ENCODE measurements at regions of chr10 and their contacts with region 1.

Region 1: GRCh38 chr10:74255888-74256357 is 104.9 kb downstream of the ADK start:
- DNase-seq: peak in 2 of 3 donors; percentile 46 to 51
- H3K4me3 ChIP-seq: peak overlapping the region in 1 of 7 experiments; percentile 35
- H3K27ac ChIP-seq: no peak overlapping the region
- H3K4me1 ChIP-seq: peaks cover 0 to 24% (median 9%) of the 10 kb centered on the region in 4 experiments
- H3K27me3 ChIP-seq: no peaks in the 10 kb centered on the region

Region 2: GRCh38 chr10:74021248-74022055 is 234.5 kb before region 1 on chr10:
- CTCF ChIA-PET with region 1: no interaction called
- POLR2A ChIA-PET with region 1: no interaction called
- DNase-seq: peak; percentile 38 to 82 (median 70)
- H3K4me3 ChIP-seq: peak overlapping the region in 2 of 7 experiments; percentile 45 to 53
- H3K27ac ChIP-seq: peak overlapping the region; percentile 70 to 83
- H3K4me1 ChIP-seq: peaks cover 2 to 19% (median 11%) of the 10 kb centered on the region in 4 experiments
- H3K27me3 ChIP-seq: no peaks in the 10 kb centered on the region

Region 3: GRCh38 chr10:74244097-74244685 is 11.7 kb before region 1 on chr10:
- CTCF ChIA-PET with region 1: interaction called, 12 read pairs
- POLR2A ChIA-PET with region 1: interaction called, 3 read pairs
- DNase-seq: peak; percentile 69 to 82 (median 77)
- H3K4me3 ChIP-seq: no peak overlapping the region
- H3K27ac ChIP-seq: no peak overlapping the region
- H3K4me1 ChIP-seq: peaks cover 0 to 5% (median 1%) of the 10 kb centered on the region in 4 experiments
- H3K27me3 ChIP-seq: no peaks in the 10 kb centered on the region

Measured in common myeloid progenitor, CD34-positive (primary cell).